Activated CD4-positive, alpha-beta T cell treated with anti-CD3 and anti-CD28 coated beads, Interleukin-2, amount 10 ng/mL, durations not matched to agents 24 days and 14 days (primary cell): ENCODE measurements at regions of chr3 and their contacts with region 1.

Region 1: GRCh38 chr3:13884851-13885703 is 5.2 kb upstream of the WNT7A start:
- DNase-seq: peak; percentile 92
- H3K4me3 Mint-ChIP-seq: no peak overlapping the region
- H3K27ac Mint-ChIP-seq: no peak overlapping the region
- H3K4me1 Mint-ChIP-seq: peaks cover 5% of the 10 kb centered on the region
- H3K27me3 Mint-ChIP-seq: peaks cover 45% of the 10 kb centered on the region

Region 2: DNA sequence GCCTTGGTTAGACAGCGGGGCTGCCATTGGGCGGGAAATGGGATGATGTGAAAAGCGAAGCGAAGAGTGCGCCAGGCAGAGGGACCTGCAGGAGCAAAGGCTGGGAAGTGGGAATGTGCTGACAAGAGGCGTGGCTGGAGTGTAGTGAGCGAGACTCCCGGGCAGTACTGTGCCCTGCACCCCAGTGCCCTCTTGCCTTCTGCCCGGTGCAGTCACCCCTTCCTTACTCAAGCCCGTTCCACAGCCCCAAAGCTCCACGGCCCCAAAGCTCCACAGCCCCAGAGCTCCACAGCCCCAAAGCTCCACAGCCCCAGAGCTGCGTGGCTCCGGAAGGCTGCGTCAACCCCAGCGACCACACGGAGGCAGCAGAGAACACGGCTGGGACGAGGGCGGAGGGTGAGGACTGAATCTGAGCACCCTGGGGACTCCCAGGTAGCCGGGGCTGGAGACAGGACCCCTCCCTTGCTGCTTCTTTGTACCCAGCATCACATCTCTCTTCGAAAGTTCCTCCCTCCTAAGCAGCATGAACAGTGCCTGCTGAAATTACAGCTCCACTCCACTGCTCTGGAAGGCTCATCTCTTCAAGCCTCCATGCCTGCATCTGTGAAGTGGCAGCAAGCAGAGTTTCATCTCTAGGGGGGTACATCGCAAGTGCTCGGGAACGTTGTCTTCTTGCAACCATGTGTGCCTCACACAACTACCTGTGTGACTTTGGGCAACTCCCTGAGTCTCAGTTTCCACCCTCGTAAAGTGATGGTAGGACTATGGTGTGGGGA is 227.2 kb before region 1 on chr3:
- intact Hi-C with region 1: loop called (anchors 1 kb)
- DNase-seq: peak; percentile 92
- H3K4me3 Mint-ChIP-seq: no peak overlapping the region
- H3K27ac Mint-ChIP-seq: no peak overlapping the region
- H3K4me1 Mint-ChIP-seq: peaks cover 4% of the 10 kb centered on the region
- H3K27me3 Mint-ChIP-seq: peaks cover 28% of the 10 kb centered on the region

Region 3: DNA sequence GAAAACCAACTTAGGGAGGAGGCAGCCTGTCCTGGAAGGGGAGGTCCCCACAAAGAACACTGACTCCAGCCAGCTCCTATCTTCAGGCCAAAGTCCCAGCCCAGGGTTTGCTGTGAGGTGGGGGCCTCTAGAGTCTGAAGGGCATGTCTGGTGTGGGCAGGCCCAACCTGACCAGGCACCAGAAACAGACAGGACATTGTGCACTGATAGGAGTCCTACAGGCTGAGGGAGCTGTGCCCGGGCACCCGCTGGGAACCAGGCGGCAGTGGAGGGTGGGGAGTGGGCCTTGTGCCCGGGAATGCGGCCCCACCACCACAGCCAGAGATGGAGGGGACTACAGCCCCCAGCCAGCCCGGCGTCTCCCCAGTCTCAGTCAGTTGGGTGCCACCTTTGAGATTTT is 166.6 kb before region 1 on chr3:
- intact Hi-C with region 1: no loop called
- DNase-seq: peak; percentile 39
- H3K4me3 Mint-ChIP-seq: no peak overlapping the region
- H3K27ac Mint-ChIP-seq: no peak overlapping the region
- H3K4me1 Mint-ChIP-seq: no peaks in the 10 kb centered on the region
- H3K27me3 Mint-ChIP-seq: peaks cover 5% of the 10 kb centered on the region

Region 4: GRCh38 chr3:13932578-13933295 is 47.7 kb after region 1 on chr3:
- intact Hi-C with region 1: no loop called
- DNase-seq: no peak
- H3K4me3 Mint-ChIP-seq: peak overlapping the region; percentile 74
- H3K27ac Mint-ChIP-seq: no peak overlapping the region
- H3K4me1 Mint-ChIP-seq: no peaks in the 10 kb centered on the region
- H3K27me3 Mint-ChIP-seq: peaks cover 3% of the 10 kb centered on the region